HEK293T (cell line): ENCODE measurements at regions of chr14 and their contacts with region 1.

Region 1: GRCh38 chr14:65412032-65412846 is at the start of gene FUT8:
- DNase-seq: peak; percentile 84

Region 2: DNA sequence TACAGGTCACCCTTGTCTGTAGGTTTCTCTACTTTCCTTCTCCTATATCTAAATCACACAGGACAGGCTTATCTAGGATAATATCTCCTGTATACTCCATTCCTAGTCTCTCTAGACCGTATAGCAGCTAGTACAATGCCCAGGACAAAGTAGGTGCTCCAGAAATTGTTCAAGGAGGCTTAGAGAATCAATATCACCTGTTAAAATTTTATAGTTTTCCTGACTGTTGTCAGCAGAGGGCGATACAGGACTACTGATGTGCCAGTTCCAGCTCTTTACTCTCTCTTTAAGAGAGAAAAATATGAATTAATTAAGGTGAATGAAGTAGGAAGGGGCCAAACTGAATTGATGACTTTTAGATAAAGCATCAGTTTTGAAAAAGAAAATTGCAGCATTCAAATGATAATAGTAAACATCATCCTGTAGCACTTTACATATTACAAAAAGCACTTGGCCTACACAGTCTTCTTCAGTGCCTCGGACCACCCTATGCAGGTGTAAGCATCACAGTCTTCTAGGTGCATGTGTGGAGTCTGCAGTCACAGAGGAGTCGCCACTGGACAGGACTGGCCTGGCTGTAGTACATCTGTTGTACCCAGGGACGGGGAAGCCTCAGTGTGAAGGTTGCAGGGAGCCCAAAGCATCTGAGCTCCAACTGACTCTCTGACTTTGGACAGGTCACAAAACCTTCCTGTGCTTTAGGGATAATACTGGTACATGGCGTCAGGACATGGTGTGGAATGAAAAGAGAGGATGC is 248.0 kb before region 1 on chr14:
- CTCF ChIA-PET with region 1: interaction called, 11 read pairs
- POLR2A ChIA-PET with region 1: interaction called, 21 read pairs
- DNase-seq: peak; percentile 47

Region 3: GRCh38 chr14:65170768-65171507 is 241.3 kb before region 1 on chr14:
- CTCF ChIA-PET with region 1: no interaction called
- POLR2A ChIA-PET with region 1: interaction called, 21 read pairs
- DNase-seq: peak; percentile 60

Region 4: GRCh38 chr14:65453807-65454480 is 41.7 kb after region 1 on chr14:
- CTCF ChIA-PET with region 1: no interaction called
- POLR2A ChIA-PET with region 1: no interaction called
- DNase-seq: no peak

Region 5: DNA sequence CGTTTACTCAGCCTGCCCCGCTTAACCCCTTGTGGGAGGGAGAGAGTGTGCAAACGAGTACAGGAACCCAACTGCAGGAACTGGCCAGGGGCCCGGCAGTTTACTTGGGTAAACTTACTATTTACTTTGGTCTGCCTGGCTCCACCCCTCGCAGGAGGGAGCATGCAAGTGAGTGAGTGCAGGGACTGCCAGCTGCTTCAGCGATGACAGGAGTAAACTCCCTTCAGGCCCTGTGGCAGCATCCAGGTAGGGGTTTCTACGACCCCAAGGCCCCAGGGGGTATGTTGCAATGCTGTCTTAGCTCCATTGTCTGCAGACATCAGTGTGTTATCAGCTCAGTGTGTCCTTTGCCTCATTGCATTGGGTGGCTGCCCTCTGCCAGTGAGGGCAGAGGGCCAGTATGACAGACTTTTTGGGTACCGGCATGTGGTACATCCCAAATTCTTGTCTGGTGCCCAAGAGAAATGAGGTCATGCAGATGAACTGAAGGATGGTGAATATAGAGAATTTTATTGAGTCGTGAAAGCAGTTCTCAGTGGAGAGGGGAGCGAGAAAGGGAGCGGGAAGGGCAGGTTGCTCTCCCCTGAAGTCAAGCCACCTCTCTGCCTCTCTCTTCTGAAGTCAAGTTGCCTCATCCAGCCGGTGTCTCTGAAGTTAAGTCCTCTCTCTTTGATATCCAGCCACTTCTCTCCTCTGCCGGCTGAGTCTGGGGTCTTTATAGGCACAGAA is 182.1 kb after region 1 on chr14:
- CTCF ChIA-PET with region 1: no interaction called
- POLR2A ChIA-PET with region 1: no interaction called
- DNase-seq: no peak

Region 6: DNA sequence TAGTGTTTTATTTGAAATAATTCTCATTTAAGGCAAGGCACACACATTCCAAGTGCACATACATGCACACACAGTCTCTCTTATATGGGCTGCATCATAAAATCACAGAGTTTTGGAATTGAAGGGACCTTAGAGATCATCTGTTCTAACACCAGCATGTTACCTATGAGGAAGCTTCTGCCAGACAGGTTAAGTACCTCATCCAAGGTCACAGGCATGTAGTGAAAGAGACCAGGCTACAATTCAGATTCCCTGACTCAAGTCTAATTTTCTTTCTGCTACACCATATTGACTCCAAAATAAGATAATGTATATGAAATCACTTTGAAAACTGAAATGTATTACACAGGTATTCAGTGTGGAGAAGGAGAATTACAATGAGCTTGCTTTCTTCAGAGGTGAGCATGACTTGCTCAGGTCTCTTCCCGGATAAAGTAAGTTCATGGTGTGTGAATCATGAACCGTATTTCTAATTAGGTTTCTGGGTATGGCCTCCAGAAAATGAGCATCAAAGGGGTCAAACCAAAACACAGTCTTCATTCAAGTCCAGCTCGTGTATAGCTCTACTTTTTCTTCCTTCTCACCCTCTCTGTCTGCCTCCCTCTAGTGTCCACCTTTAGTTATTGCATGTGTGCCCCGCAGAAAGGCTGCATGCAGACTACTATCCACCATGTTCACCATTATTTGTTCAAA is 412.2 kb after region 1 on chr14:
- CTCF ChIA-PET with region 1: interaction called, 31 read pairs
- POLR2A ChIA-PET with region 1: interaction called, 11 read pairs
- DNase-seq: peak; percentile 65

Region 7: GRCh38 chr14:65958664-65959562 is 546.7 kb after region 1 on chr14:
- CTCF ChIA-PET with region 1: interaction called, 12 read pairs
- POLR2A ChIA-PET with region 1: interaction called, 4 read pairs
- DNase-seq: peak; percentile 39